ENCODE measurements at regions of chr1 and their contacts with region 1.

Region 1: GRCh38 chr1:181208967-181209366 is 120.5 kb downstream of the IER5 start:
- DNase-seq: no peak

Region 2: DNA sequence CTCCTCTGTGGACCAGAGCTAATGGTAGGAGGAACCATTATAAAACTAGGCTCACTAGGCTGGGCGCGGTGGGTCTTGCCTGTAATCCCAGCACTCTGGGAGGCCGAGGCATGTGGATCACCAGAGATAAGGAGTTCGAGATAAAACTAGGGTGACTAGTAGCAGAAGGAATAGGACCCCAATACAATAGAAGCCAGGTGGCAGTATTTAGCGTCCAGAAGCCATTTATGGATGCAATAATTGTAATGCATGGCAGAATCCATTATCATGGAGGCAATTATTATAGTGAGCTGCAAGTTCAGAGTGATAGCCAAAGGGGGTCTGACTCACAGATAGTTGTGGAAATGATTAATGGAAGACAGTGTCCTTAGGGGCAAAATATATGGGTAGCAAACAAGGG is 23.6 kb after region 1 on chr1:
- intact Hi-C with region 1: loop called in 1 of 2 experiments (anchors 2 kb)
- DNase-seq: no peak